Activated CD4-positive, alpha-beta T cell treated with anti-CD3 and anti-CD28 coated beads for 36 hours (primary cell): ENCODE measurements at regions of chr4 and their contacts with region 1.

Region 1: GRCh38 chr4:109947457-109947856 is 34.8 kb downstream of the EGF start:
- DNase-seq: no peak
- ATAC-seq: peak; percentile 85
- H3K4me3 Mint-ChIP-seq: no peak overlapping the region
- H3K27ac Mint-ChIP-seq: peak overlapping the region; percentile 74
- H3K4me1 Mint-ChIP-seq: peaks cover 54% of the 10 kb centered on the region
- H3K27me3 Mint-ChIP-seq: peaks cover 2% of the 10 kb centered on the region

Region 2: GRCh38 chr4:109472343-109472761 is 475.1 kb before region 1 on chr4:
- CTCF ChIA-PET with region 1: no interaction called
- POLR2A ChIA-PET with region 1: interaction called, 9 read pairs
- intact Hi-C with region 1: loop called (anchors 5 kb)
- DNase-seq: no peak
- ATAC-seq: peak; percentile 85
- H3K4me3 Mint-ChIP-seq: no peak overlapping the region
- H3K27ac Mint-ChIP-seq: peak overlapping the region; percentile 17
- H3K4me1 Mint-ChIP-seq: peaks cover 50% of the 10 kb centered on the region
- H3K27me3 Mint-ChIP-seq: no peaks in the 10 kb centered on the region

Region 3: DNA sequence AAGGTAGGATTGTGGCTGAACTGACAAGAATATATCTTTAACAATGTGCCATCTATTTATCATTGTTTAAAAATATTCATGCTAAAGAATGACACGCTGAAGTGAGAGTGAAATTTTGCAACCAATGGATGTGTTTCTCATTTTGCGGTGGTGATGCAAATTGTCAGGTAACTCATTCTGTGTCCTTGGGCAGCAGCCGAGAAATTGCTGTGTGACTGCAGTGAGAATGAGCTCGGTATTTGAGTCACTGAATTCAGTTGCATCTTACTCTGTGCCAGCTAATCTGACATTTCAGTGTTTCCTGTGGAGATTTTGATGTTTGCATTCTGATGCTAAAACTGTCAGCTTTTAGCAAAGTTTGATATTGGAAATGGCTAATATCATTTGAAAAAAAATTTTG is 359.3 kb before region 1 on chr4:
- CTCF ChIA-PET with region 1: no interaction called
- POLR2A ChIA-PET with region 1: no interaction called
- intact Hi-C with region 1: loop called in 1 of 2 experiments (anchors 5 kb)
- DNase-seq: peak; percentile 82
- ATAC-seq: peak; percentile 99
- H3K4me3 Mint-ChIP-seq: peak overlapping the region; percentile 11
- H3K27ac Mint-ChIP-seq: peak overlapping the region; percentile 86
- H3K4me1 Mint-ChIP-seq: peaks cover 84% of the 10 kb centered on the region
- H3K27me3 Mint-ChIP-seq: no peaks in the 10 kb centered on the region

Region 4: DNA sequence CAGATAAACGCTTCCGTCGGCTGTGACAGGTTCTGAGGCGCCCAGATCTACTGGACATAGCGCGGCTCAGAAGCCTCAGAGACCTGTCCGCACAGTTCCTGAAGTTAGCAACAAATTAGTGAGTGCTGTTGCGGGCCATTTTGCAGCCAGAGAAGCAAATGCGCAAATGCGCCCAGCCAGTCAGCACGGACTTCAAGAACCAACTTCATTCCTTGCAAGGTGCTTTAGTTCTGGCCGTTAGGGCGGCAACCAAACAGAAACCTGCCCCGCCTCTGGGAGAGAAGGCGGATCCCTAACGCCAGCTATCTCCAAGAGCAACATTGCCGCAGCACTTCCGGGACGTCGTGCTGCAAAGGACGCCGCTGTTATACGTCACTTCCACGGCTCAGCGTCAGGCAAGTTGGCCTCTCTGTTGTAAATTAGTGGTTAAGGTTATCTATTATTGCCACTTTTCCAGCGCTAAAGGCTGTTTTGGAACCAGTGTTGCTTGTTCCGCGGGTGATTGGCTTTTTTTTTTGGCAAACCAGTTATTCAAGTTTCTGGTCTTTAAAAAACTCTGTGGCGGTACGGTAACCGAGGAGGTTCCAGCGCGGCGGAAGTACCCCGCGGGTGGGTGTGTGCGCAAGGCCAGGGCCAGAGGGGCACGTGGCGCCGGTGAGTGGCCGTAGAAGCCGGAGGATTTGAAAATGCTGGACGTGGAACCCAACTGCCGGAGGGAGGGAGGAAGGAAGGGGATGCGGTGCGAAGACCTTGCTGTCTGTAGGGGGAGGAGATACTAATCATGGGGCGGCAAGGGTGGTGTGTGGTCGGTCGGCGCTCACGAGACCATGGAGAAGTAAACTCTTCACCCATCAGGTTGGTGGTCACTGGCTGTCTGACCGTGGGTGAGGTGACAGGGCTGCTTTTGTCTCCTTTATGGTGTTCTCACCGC is 132.0 kb before region 1 on chr4 and contains the start of gene GAR1:
- CTCF ChIA-PET with region 1: interaction called, 3 read pairs
- POLR2A ChIA-PET with region 1: no interaction called
- intact Hi-C with region 1: loop called (anchors 2 to 10 kb)
- DNase-seq: peak; percentile 94
- ATAC-seq: peak; percentile 92
- H3K4me3 Mint-ChIP-seq: peak within 1 kb of the TSS; percentile 99
- H3K27ac Mint-ChIP-seq: peak within 1 kb of the TSS; percentile 99
- H3K4me1 Mint-ChIP-seq: peaks cover 49% of the 10 kb centered on the region
- H3K27me3 Mint-ChIP-seq: no peaks in the 10 kb centered on the region
- total RNA-seq, gene GAR1: 37.4 to 42.2 TPM

Region 5: GRCh38 chr4:109967797-109968507 is 20.5 kb after region 1 on chr4:
- CTCF ChIA-PET with region 1: no interaction called
- POLR2A ChIA-PET with region 1: no interaction called
- intact Hi-C with region 1: loop called in 1 of 2 experiments (anchors 1 kb)
- DNase-seq: no peak
- ATAC-seq: peak; percentile 93
- H3K4me3 Mint-ChIP-seq: no peak overlapping the region
- H3K27ac Mint-ChIP-seq: no peak overlapping the region
- H3K4me1 Mint-ChIP-seq: peaks cover 15% of the 10 kb centered on the region
- H3K27me3 Mint-ChIP-seq: peaks cover 11% of the 10 kb centered on the region

Region 6: DNA sequence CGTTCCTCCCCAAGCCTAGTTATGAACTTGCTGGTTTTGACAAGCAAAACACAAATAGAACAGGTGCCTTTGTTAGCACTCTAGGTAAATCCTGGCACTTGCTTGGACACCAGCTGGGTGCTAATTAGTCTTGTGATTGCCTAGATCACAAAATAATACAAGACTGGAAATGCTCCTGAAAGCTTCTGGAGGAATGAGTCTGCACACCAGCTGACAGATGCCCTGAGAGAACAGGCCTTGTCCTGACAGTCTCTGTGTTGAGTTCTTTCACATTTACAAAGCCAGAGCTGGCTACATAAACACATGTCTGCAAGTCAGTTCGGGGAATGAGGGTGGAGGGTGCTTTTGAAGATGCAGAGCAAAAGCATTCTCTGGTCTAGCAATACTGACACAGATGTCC is 157.2 kb after region 1 on chr4:
- CTCF ChIA-PET with region 1: no interaction called
- POLR2A ChIA-PET with region 1: no interaction called
- intact Hi-C with region 1: no loop called
- DNase-seq: no peak
- ATAC-seq: no peak
- H3K4me3 Mint-ChIP-seq: no peak overlapping the region
- H3K27ac Mint-ChIP-seq: no peak overlapping the region
- H3K4me1 Mint-ChIP-seq: peaks cover 1% of the 10 kb centered on the region
- H3K27me3 Mint-ChIP-seq: no peaks in the 10 kb centered on the region

Region 7: GRCh38 chr4:110287130-110287529 is 339.7 kb after region 1 on chr4:
- CTCF ChIA-PET with region 1: no interaction called
- POLR2A ChIA-PET with region 1: no interaction called
- intact Hi-C with region 1: loop called in 1 of 2 experiments (anchors 5 kb)
- DNase-seq: peak; percentile 39
- ATAC-seq: peak; percentile 97
- H3K4me3 Mint-ChIP-seq: no peak overlapping the region
- H3K27ac Mint-ChIP-seq: no peak overlapping the region
- H3K4me1 Mint-ChIP-seq: peaks cover 8% of the 10 kb centered on the region
- H3K27me3 Mint-ChIP-seq: peaks cover 28% of the 10 kb centered on the region